ENCODE measurements at regions of chr11 and their contacts with region 1.

Region 1: GRCh38 chr11:17276236-17277023 is at the start of gene NUCB2:
- DNase-seq: peak; percentile 95 to 99 (median 97)
- H3K4me3 ChIP-seq: peak within 1 kb of the TSS; percentile 57 to 98 (median 90)
- H3K27ac ChIP-seq: peak within 1 kb of the TSS; percentile 69 to 98 (median 90)
- H3K27me3 ChIP-seq: no peaks in the 10 kb centered on the region
- CTCF ChIP-seq: peak in 39 of 56 donors; percentile 4 to 60 (median 32)
- total RNA-seq, gene NUCB2: 29.3 to 67.4 (median 44.9) TPM

Region 2: GRCh38 chr11:17077520-17078401 is 198.7 kb before region 1 on chr11 and contains the start of gene RPS13:
- intact Hi-C with region 1: loop called (anchors 2 to 5 kb)
- DNase-seq: peak; percentile 98 to 99 (median 99)
- H3K4me3 ChIP-seq: peak within 1 kb of the TSS; percentile 58 to 100 (median 96)
- H3K27ac ChIP-seq: peak within 1 kb of the TSS; percentile 42 to 96 (median 90)
- H3K27me3 ChIP-seq: no peaks in the 10 kb centered on the region
- CTCF ChIP-seq: peak in 27 of 56 donors; percentile 3 to 55 (median 23)
- total RNA-seq, gene RPS13: 204 to 383 (median 281) TPM

Region 3: DNA sequence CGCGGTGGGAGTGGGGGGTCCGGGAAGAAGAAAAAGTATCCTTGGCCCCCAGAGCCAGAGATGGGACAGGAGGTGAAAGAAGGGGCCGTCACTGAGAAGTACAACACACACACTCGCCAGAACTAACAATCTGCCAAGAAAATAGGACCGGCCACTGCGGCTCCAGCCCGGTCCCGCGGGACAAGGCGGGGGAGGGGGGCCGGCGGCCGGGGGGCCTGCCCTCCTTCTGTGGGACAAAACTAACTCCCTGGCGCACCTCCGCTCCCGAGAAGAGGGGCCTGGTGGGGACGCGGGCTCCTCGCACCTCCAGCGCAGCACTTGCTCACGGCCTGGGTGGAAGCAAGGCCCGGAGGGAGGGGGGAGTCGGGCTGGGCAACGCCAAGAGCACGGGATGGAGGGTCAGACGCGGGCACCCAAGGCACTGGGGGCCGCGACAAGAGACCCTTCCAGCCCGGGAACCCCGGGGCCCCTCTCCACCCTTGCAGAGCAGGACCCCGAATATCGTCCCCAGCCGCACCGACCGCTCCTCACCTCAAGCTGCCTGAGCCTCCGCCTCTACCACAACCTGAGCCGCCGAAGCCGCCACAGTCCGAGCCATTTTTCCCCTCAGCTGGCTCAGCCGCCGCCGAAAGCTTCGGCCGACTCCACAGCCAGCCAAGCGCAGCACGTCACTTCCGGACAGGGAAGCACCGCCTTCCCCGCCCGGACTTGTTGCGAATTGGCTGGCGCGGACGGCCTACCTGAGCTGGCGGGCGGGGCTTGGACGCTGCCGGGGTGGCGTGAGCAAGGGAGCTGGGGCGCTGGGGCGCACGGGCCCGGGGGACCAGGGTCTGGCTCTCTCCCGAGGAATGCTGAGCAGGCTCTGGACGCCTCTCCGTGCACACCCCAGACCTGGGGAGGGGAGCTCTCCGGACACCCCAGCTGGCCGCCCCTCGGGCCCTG is 68.8 kb before region 1 on chr11 and contains the start of gene PIK3C2A:
- intact Hi-C with region 1: loop called (anchors 2 to 5 kb)
- DNase-seq: peak; percentile 92 to 99 (median 97)
- H3K4me3 ChIP-seq: peak within 1 kb of the TSS; percentile 71 to 100 (median 94)
- H3K27ac ChIP-seq: peak within 1 kb of the TSS; percentile 63 to 99 (median 93)
- H3K27me3 ChIP-seq: no peaks in the 10 kb centered on the region
- CTCF ChIP-seq: peak in 6 of 56 donors; percentile 3 to 18 (median 9)
- total RNA-seq, gene PIK3C2A: 48.9 to 110 (median 68.0) TPM

Region 4: DNA sequence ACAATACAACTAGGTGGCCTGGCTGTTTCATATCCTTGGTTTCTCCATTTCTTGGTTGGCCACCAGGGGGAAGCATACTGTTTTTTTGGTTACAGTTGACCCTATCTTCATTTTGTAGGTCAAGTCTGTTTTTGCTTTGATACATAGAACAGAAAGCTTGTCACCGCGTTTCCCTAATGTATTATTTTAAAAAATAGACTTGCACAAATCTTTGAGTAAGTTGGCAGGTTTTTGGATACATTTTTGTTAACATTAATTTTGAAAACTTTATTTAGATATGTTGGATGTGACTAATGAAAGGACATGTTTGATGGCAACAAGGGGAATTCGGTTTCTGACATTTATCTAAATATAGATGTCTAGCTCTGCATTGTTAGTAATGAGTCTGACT is 78.2 kb after region 1 on chr11:
- intact Hi-C with region 1: loop called in 1 of 2 experiments (anchors 2 kb)
- DNase-seq: peak in 4 of 10 donors; percentile 52 to 80 (median 66)
- H3K4me3 ChIP-seq: peak overlapping the region in 52 of 59 donors; percentile 1 to 85 (median 74)
- H3K27ac ChIP-seq: peak overlapping the region in 16 of 59 donors; percentile 1 to 91 (median 66)
- H3K27me3 ChIP-seq: no peaks in the 10 kb centered on the region
- CTCF ChIP-seq: peak; percentile 48 to 81 (median 71)

Region 5: GRCh38 chr11:17504330-17505107 is 228.1 kb after region 1 on chr11:
- intact Hi-C with region 1: loop called in 1 of 2 experiments (anchors 10 kb)
- DNase-seq: peak; percentile 81 to 90 (median 86)
- H3K4me3 ChIP-seq: no peak overlapping the region
- H3K27ac ChIP-seq: peak overlapping the region in 1 of 59 donors; percentile 30
- H3K27me3 ChIP-seq: no peaks in the 10 kb centered on the region
- CTCF ChIP-seq: peak; percentile 74 to 99 (median 95)

Measured in dorsolateral prefrontal cortex (tissue), 120 donors.